ENCODE measurements at regions of chr2 and their contacts with region 1.

Region 1: DNA sequence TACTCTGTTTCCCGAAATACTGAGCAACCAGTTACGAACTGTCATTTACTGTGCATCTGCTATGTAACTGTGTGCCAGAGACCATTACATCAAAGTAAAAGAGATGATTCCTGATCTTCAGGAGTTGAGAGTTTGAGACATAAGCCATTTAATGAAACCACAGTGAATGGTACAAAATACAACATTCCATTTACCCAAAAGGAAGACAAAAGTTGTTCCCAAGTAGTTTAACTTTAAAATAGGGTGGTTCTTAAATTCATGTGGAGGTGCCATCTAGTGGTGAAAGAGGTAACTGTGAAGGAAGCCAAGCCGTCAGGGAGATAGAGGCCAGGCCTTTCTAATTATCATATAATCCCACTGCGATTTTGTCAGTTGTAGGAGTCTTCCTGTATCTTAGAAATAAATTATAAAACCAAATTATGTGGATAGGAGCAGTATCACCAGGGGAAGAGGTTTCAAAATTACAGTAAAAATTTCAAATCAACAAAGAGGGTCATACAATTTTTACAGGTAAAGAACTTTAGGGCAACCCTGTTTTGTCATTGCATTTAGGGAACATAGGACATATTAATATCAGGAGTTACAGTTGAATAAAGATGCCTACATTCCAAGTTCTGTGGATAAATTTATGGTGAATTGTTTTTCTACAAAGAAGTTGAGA is 67.7 kb downstream of the EPAS1 start:
- DNase-seq: no peak
- ATAC-seq: no peak
- H3K4me3 Mint-ChIP-seq: no peak overlapping the region
- H3K27ac Mint-ChIP-seq: no peak overlapping the region
- H3K4me1 Mint-ChIP-seq: peaks cover 19% of the 10 kb centered on the region
- H3K27me3 Mint-ChIP-seq: no peaks in the 10 kb centered on the region
- CTCF ChIP-seq: peak; percentile 74

Region 2: GRCh38 chr2:44981136-44982108 is 1383.5 kb before region 1 on chr2:
- CTCF ChIA-PET with region 1: no interaction called
- POLR2A ChIA-PET with region 1: no interaction called
- intact Hi-C with region 1: loop called (anchors 5 kb)
- DNase-seq: peak; percentile 50
- ATAC-seq: no peak
- H3K4me3 Mint-ChIP-seq: no peak overlapping the region
- H3K27ac Mint-ChIP-seq: no peak overlapping the region
- H3K4me1 Mint-ChIP-seq: peaks cover 2% of the 10 kb centered on the region
- H3K27me3 Mint-ChIP-seq: peaks cover 8% of the 10 kb centered on the region
- CTCF ChIP-seq: peak; percentile 37

Region 3: DNA sequence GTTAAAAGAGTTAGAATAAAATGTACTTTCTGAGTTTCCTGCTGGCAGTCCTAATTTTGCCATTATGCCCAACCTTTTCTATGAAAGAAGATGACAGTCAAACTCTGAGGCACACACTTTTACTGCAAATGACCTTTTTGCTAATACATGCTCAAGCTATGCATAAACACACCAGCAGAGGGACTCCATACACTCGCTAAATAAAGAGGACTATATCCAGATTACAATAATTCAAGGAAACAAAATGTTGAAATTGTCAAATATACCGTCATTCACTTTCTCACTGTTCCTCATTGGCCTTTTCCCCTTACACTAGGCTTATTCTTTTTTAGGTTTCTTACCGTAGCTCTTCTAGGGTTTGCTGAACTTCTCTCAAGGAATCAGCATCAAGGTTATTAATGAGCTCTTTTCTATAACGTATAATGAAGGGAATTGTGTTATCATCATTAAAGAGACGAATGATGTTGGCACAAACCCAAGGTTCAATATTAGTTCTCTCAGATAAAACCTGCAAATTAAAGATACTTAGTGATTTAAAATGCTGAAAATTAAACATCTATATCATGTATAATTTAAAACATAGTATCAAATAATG is 779.6 kb before region 1 on chr2:
- CTCF ChIA-PET with region 1: no interaction called
- POLR2A ChIA-PET with region 1: no interaction called
- intact Hi-C with region 1: loop called (anchors 1 kb)
- DNase-seq: no peak
- ATAC-seq: peak; percentile 52
- H3K4me3 Mint-ChIP-seq: no peak overlapping the region
- H3K27ac Mint-ChIP-seq: no peak overlapping the region
- H3K4me1 Mint-ChIP-seq: peaks cover 13% of the 10 kb centered on the region
- H3K27me3 Mint-ChIP-seq: no peaks in the 10 kb centered on the region
- CTCF ChIP-seq: peak; percentile 48

Region 4: DNA sequence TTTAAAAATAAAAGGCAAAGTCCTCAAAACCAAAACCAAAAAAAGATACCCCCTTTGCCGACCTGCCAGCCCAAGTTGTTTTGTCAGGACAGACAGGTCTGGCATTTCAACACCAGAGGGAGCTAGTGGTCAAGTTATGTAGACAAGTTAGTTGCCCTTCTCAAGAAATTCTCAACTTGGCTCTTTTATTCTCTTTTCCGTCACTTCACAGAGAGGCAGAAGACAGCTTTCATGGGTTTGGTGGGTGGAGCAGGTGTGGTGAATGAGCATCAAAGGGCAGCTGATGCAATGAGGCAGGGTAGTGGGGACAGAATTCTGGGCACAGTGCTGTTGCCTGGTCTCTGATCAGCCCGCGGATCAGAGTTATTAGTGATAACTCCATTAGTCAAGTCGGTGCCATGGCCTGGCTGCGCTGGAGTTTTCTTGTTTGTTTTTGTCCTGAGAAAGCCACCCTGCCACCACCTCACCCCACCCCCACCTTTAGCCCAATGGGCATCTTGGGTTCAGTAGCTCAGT is 371.4 kb before region 1 on chr2:
- CTCF ChIA-PET with region 1: interaction called, 3 read pairs
- POLR2A ChIA-PET with region 1: no interaction called
- intact Hi-C with region 1: loop called (anchors 1 kb)
- DNase-seq: no peak
- ATAC-seq: peak; percentile 47
- H3K4me3 Mint-ChIP-seq: no peak overlapping the region
- H3K27ac Mint-ChIP-seq: no peak overlapping the region
- H3K4me1 Mint-ChIP-seq: no peaks in the 10 kb centered on the region
- H3K27me3 Mint-ChIP-seq: no peaks in the 10 kb centered on the region
- CTCF ChIP-seq: peak; percentile 61

Region 5: DNA sequence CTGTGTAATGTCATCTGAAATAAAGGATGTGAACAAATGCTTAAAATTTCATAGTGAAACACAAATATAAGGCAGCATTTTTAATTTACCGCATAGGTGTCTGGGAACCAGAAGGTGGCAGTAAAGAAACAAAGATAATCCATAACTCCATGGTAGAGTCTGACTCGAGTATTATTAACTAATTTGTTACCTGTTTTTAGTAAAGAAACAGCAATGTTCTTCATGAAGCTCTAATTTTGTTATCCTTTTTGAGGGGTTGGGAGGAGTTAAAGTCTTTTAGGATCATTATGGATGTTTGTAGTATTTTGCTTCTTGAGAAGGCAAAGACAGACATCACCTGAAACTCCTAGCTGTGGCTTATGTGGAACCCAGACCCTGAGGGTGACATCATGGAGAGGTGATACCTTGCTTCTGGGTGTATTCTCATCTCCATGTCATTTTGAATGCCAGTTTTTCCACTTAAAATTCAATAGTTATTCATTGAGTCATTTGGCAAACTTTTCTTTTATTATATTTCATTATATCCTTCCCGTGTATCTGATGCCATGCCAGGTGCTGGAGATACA is 353.9 kb before region 1 on chr2:
- CTCF ChIA-PET with region 1: interaction called, 3 read pairs
- POLR2A ChIA-PET with region 1: no interaction called
- intact Hi-C with region 1: loop called (anchors 5 kb)
- DNase-seq: no peak
- ATAC-seq: no peak
- H3K4me3 Mint-ChIP-seq: no peak overlapping the region
- H3K27ac Mint-ChIP-seq: no peak overlapping the region
- H3K4me1 Mint-ChIP-seq: no peaks in the 10 kb centered on the region
- H3K27me3 Mint-ChIP-seq: no peaks in the 10 kb centered on the region
- CTCF ChIP-seq: no peak

Region 6: GRCh38 chr2:46062637-46063412 is 302.1 kb before region 1 on chr2:
- CTCF ChIA-PET with region 1: interaction called, 15 read pairs
- POLR2A ChIA-PET with region 1: no interaction called
- intact Hi-C with region 1: loop called (anchors 1 kb)
- DNase-seq: peak; percentile 30
- ATAC-seq: peak; percentile 70
- H3K4me3 Mint-ChIP-seq: no peak overlapping the region
- H3K27ac Mint-ChIP-seq: no peak overlapping the region
- H3K4me1 Mint-ChIP-seq: no peaks in the 10 kb centered on the region
- H3K27me3 Mint-ChIP-seq: no peaks in the 10 kb centered on the region
- CTCF ChIP-seq: peak; percentile 59

Region 7: GRCh38 chr2:46650556-46651001 is 285.7 kb after region 1 on chr2:
- CTCF ChIA-PET with region 1: no interaction called
- POLR2A ChIA-PET with region 1: no interaction called
- intact Hi-C with region 1: loop called (anchors 10 kb)
- DNase-seq: no peak
- ATAC-seq: peak; percentile 79
- H3K4me3 Mint-ChIP-seq: no peak overlapping the region
- H3K27ac Mint-ChIP-seq: no peak overlapping the region
- H3K4me1 Mint-ChIP-seq: no peaks in the 10 kb centered on the region
- H3K27me3 Mint-ChIP-seq: no peaks in the 10 kb centered on the region
- CTCF ChIP-seq: peak; percentile 83

Measured in activated B cell treated with CpG ODN at 0.5 μM for 24 hours (primary cell).